ENCODE measurements at regions of chr9 and their contacts with region 1.

Region 1: GRCh38 chr9:37953775-37954437 is 50.0 kb upstream of the SLC25A51 start:
- DNase-seq: peak; percentile 80
- H3K4me3 Mint-ChIP-seq: peak overlapping the region; percentile 34
- H3K27ac Mint-ChIP-seq: peak overlapping the region; percentile 85
- H3K4me1 Mint-ChIP-seq: peaks cover 26% of the 10 kb centered on the region
- H3K27me3 Mint-ChIP-seq: no peaks in the 10 kb centered on the region

Region 2: GRCh38 chr9:37800631-37801286 is 153.1 kb before region 1 on chr9 and contains the start of gene DCAF10:
- CTCF ChIA-PET with region 1: no interaction called
- POLR2A ChIA-PET with region 1: no interaction called
- intact Hi-C with region 1: no loop called
- DNase-seq: peak; percentile 92
- H3K4me3 Mint-ChIP-seq: peak within 1 kb of the TSS; percentile 93
- H3K27ac Mint-ChIP-seq: peak within 1 kb of the TSS; percentile 85
- H3K4me1 Mint-ChIP-seq: peaks cover 40% of the 10 kb centered on the region
- H3K27me3 Mint-ChIP-seq: no peaks in the 10 kb centered on the region
- total RNA-seq, gene DCAF10: 13.8 to 17.2 TPM

Region 3: GRCh38 chr9:37929441-37929895 is 24.4 kb before region 1 on chr9:
- CTCF ChIA-PET with region 1: no interaction called
- POLR2A ChIA-PET with region 1: no interaction called
- intact Hi-C with region 1: no loop called
- DNase-seq: no peak
- H3K4me3 Mint-ChIP-seq: no peak overlapping the region
- H3K27ac Mint-ChIP-seq: no peak overlapping the region
- H3K4me1 Mint-ChIP-seq: peaks cover 2% of the 10 kb centered on the region
- H3K27me3 Mint-ChIP-seq: no peaks in the 10 kb centered on the region

Region 4: GRCh38 chr9:37976714-37977477 is 23.0 kb after region 1 on chr9:
- CTCF ChIA-PET with region 1: no interaction called
- POLR2A ChIA-PET with region 1: no interaction called
- intact Hi-C with region 1: no loop called
- DNase-seq: no peak
- H3K4me3 Mint-ChIP-seq: no peak overlapping the region
- H3K27ac Mint-ChIP-seq: no peak overlapping the region
- H3K4me1 Mint-ChIP-seq: no peaks in the 10 kb centered on the region
- H3K27me3 Mint-ChIP-seq: no peaks in the 10 kb centered on the region

Region 5: DNA sequence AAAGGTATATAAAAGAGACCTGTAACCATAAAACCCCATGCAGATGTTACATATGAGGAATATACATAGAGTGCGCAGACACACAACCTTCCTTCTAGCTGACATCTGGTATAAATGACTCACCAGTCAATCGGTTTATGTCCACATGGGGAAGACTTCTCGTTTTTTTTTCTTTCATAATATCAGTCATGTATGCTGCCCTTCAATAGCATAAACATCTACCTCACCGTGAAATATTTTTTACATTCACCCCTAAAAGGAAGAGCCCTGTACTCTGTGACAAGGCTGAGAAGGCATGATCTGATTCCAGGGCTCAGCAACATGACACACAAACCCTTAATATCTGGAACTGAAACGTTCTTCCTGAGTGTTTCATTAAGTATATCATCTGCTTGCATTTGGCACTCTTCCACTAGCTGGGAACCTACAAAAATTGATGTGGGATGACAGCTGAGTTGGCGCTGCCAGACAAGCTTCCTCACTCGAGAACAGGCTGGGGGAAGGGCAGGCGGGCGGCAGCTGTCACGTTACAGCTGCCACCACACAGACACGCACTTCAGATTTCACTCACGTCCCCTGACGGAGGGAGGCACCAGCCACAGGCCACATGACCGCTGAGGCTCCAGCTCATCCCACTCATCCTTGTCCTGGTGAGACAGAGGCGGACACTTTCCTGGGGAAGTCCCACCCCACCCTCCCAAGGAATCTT is 40.9 kb after region 1 on chr9:
- CTCF ChIA-PET with region 1: no interaction called
- POLR2A ChIA-PET with region 1: interaction called, 3 read pairs
- intact Hi-C with region 1: loop called (anchors 1 kb)
- DNase-seq: peak; percentile 75
- H3K4me3 Mint-ChIP-seq: no peak overlapping the region
- H3K27ac Mint-ChIP-seq: peak overlapping the region; percentile 59
- H3K4me1 Mint-ChIP-seq: peaks cover 11% of the 10 kb centered on the region
- H3K27me3 Mint-ChIP-seq: peaks cover 7% of the 10 kb centered on the region

Region 6: DNA sequence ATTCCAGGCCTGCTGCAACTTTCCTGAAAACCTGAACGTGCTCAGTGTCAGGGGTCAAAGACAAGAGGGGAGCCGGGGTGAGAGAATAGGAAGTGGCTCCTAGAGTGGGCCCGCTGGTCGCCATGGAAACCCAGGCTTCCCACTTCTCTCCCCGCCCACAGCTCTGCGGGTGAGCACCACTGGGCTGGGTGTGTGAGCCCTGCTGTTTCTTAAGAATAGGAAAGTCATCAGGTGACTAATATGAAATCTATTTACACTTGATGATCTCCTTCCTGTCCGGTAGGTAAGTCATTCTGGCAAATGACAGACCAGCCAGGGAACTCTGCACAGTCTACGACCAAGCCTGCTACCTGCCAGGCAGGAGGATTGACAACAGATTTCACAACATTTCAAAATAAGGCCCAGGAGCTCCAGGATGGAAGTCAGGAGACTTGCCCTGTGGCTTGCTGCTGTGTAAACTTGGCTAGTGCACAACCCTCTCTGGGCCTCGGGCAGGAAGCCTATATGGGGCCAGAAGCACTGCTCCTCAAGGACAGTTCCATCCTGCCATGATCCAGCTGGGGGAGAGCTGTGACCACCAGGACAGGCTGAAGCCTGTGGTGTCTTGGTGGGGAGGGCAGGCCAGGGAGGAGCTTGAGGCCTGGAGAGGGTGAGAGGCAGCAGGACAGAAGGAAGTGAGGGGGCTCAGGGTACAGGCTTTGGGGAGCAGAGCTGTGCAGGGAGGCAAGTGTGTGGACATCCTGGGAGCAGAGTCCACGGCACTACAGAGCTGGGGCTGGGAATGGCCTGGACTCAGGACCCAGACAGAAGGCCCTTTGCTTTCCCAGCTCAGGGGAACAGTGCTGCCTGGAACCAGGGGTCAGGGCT is 54.5 kb after region 1 on chr9:
- CTCF ChIA-PET with region 1: no interaction called
- POLR2A ChIA-PET with region 1: no interaction called
- intact Hi-C with region 1: loop called (anchors 1 kb)
- DNase-seq: peak; percentile 82
- H3K4me3 Mint-ChIP-seq: no peak overlapping the region
- H3K27ac Mint-ChIP-seq: peak overlapping the region; percentile 79
- H3K4me1 Mint-ChIP-seq: peaks cover 14% of the 10 kb centered on the region
- H3K27me3 Mint-ChIP-seq: no peaks in the 10 kb centered on the region

Region 7: GRCh38 chr9:38068866-38069629 is 115.1 kb after region 1 on chr9 and contains the start of gene SHB:
- CTCF ChIA-PET with region 1: interaction called, 4 read pairs
- POLR2A ChIA-PET with region 1: no interaction called
- intact Hi-C with region 1: loop called (anchors 2 kb)
- DNase-seq: peak; percentile 85
- H3K4me3 Mint-ChIP-seq: peak within 1 kb of the TSS; percentile 68
- H3K27ac Mint-ChIP-seq: no peak within 1 kb of the TSS
- H3K4me1 Mint-ChIP-seq: peaks cover 19% of the 10 kb centered on the region
- H3K27me3 Mint-ChIP-seq: peaks cover 6% of the 10 kb centered on the region
- total RNA-seq, gene SHB: 1.1 to 1.2 TPM